CD14-positive monocyte (primary cell): ENCODE measurements at regions of chr12 and their contacts with region 1.

Region 1: GRCh38 chr12:110600254-110600653 is 13.7 kb upstream of the TCTN1 start:
- DNase-seq: peak; percentile 52 to 85 (median 76)
- H3K4me3 ChIP-seq: no peak overlapping the region
- H3K4me3 Mint-ChIP-seq: no peak overlapping the region
- H3K27ac ChIP-seq: peak overlapping the region; percentile 74 to 81
- H3K27ac Mint-ChIP-seq: peak overlapping the region; percentile 8 to 85 (median 82)
- H3K4me1 ChIP-seq: peaks cover 29 to 42% of the 10 kb centered on the region in 2 donors
- H3K4me1 Mint-ChIP-seq: peaks cover 44% of the 10 kb centered on the region
- H3K27me3 ChIP-seq: no peaks in the 10 kb centered on the region
- H3K27me3 Mint-ChIP-seq: peaks cover 0 to 2% (median 0%) of the 10 kb centered on the region in 3 donors
- CTCF ChIP-seq: peak; percentile 78

Region 2: DNA sequence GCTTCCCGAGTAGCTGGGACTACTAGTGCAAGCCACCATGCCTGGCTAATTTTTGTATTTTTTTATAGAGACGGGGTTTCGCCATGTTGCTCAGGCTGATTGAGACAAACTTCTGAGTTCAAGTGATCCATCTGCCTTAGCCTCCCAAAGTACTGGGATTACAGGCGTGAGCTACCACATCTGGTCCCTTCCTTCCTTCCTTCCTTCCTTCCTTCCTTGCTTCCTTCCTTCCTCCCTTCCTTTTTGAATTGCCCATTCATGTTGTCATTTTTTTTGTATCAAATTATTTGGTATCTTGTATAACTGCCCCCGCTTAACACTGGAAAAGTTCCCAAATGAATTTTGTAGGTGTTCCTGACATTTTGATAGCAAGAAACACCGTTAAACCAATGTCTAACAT is 86.4 kb before region 1 on chr12:
- intact Hi-C with region 1: loop called in 1 of 2 experiments (anchors 2 kb)
- DNase-seq: no peak
- H3K4me3 ChIP-seq: no peak overlapping the region
- H3K4me3 Mint-ChIP-seq: no peak overlapping the region
- H3K27ac ChIP-seq: no peak overlapping the region
- H3K27ac Mint-ChIP-seq: no peak overlapping the region
- H3K4me1 ChIP-seq: no peaks in the 10 kb centered on the region
- H3K4me1 Mint-ChIP-seq: peaks cover 2% of the 10 kb centered on the region
- H3K27me3 ChIP-seq: no peaks in the 10 kb centered on the region
- H3K27me3 Mint-ChIP-seq: peaks cover 0 to 2% (median 1%) of the 10 kb centered on the region in 3 donors
- CTCF ChIP-seq: no peak

Region 3: GRCh38 chr12:110549716-110550115 is 50.5 kb before region 1 on chr12:
- intact Hi-C with region 1: loop called (anchors 1 to 2 kb)
- DNase-seq: no peak
- H3K4me3 ChIP-seq: no peak overlapping the region
- H3K4me3 Mint-ChIP-seq: no peak overlapping the region
- H3K27ac ChIP-seq: no peak overlapping the region
- H3K27ac Mint-ChIP-seq: peak overlapping the region in 1 of 7 donors; percentile 33
- H3K4me1 ChIP-seq: peaks cover 0 to 18% of the 10 kb centered on the region in 2 donors
- H3K4me1 Mint-ChIP-seq: peaks cover 29% of the 10 kb centered on the region
- H3K27me3 ChIP-seq: no peaks in the 10 kb centered on the region
- H3K27me3 Mint-ChIP-seq: peaks cover 0 to 2% (median 0%) of the 10 kb centered on the region in 3 donors
- CTCF ChIP-seq: no peak

Region 4: GRCh38 chr12:110555577-110556406 is 44.5 kb before region 1 on chr12:
- intact Hi-C with region 1: loop called (anchors 1 to 2 kb)
- DNase-seq: peak; percentile 9 to 54 (median 15)
- H3K4me3 ChIP-seq: no peak overlapping the region
- H3K4me3 Mint-ChIP-seq: peak overlapping the region in 1 of 2 donors; percentile 0
- H3K27ac ChIP-seq: peak overlapping the region in 1 of 2 donors; percentile 53
- H3K27ac Mint-ChIP-seq: peak overlapping the region; percentile 34 to 85 (median 68)
- H3K4me1 ChIP-seq: peaks cover 24 to 36% of the 10 kb centered on the region in 2 donors
- H3K4me1 Mint-ChIP-seq: peaks cover 42% of the 10 kb centered on the region
- H3K27me3 ChIP-seq: no peaks in the 10 kb centered on the region
- H3K27me3 Mint-ChIP-seq: no peaks in the 10 kb centered on the region
- CTCF ChIP-seq: no peak

Region 5: GRCh38 chr12:110718222-110718908 is 118.1 kb after region 1 on chr12:
- intact Hi-C with region 1: no loop called
- DNase-seq: no peak
- H3K4me3 ChIP-seq: no peak overlapping the region
- H3K4me3 Mint-ChIP-seq: no peak overlapping the region
- H3K27ac ChIP-seq: peak overlapping the region in 1 of 2 donors; percentile 43
- H3K27ac Mint-ChIP-seq: peak overlapping the region in 1 of 7 donors; percentile 55
- H3K4me1 ChIP-seq: no peaks in the 10 kb centered on the region
- H3K4me1 Mint-ChIP-seq: peaks cover 5% of the 10 kb centered on the region
- H3K27me3 ChIP-seq: no peaks in the 10 kb centered on the region
- H3K27me3 Mint-ChIP-seq: no peaks in the 10 kb centered on the region
- CTCF ChIP-seq: no peak